Activated T-helper 2 cell treated with anti-CD3 and anti-CD28 coated beads, Interferon-gamma antibody, Interleukin-2, Interleukin-4, amounts not matched to agents 10 μg/mL and 5 μg/mL and 100 μg/mL, durations not matched to agents 14 hours and 24 hours and 36 hours (primary cell): ENCODE measurements at regions of chr10 and their contacts with region 1.

Region 1: DNA sequence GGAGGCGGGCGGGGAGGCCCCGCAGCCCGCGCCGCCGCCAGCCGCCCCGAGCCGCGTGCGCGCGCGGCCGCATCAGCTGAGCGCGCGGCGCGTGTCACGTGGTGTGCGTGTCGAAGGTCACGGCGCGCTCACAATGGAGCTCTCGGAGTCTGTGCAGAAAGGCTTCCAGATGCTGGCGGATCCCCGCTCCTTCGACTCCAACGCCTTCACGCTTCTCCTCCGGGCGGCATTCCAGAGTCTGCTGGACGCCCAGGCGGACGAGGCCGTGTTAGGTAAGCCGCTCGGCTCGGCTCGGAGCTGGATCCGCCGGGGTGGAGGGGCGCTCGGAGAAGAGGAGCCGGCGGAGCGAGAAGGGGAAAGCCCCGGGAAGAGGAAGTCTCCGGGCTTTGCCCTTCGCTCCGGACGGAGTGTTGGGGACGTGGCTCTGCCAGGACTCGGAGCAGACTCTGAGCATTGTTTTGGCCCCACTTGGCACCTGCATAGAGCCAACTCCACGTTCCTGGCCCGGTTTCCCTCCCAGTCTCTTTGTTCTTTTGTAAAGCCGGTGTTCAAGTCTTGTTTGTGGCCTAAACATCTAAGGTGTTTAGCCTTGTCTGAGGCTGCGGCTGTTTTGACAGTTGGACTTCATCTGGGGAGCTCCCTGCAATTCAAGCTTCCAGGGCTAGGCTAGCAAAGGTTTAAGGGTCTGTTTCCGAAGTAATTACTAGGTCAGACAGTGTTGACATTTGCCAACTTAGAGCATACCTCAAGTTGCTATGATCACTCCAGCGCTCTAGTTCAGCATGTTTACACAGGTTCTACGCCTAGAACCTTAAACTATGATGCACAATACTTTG is at the start of gene COMMD3:
- DNase-seq: peak; percentile 79
- H3K4me3 Mint-ChIP-seq: peak within 1 kb of the TSS; percentile 88
- H3K27ac Mint-ChIP-seq: peak within 1 kb of the TSS; percentile 88
- H3K4me1 Mint-ChIP-seq: peaks cover 40% of the 10 kb centered on the region
- H3K27me3 Mint-ChIP-seq: peaks cover 1% of the 10 kb centered on the region
- total RNA-seq, gene COMMD3: 92.1 and 105 TPM in 2 replicates

Region 2: GRCh38 chr10:21517134-21518031 is 799.1 kb before region 1 on chr10:
- intact Hi-C with region 1: loop called (anchors 5 kb)
- DNase-seq: no peak
- H3K4me3 Mint-ChIP-seq: peak overlapping the region; percentile 65
- H3K27ac Mint-ChIP-seq: no peak overlapping the region
- H3K4me1 Mint-ChIP-seq: peaks cover 39% of the 10 kb centered on the region
- H3K27me3 Mint-ChIP-seq: peaks cover 64% of the 10 kb centered on the region

Region 3: DNA sequence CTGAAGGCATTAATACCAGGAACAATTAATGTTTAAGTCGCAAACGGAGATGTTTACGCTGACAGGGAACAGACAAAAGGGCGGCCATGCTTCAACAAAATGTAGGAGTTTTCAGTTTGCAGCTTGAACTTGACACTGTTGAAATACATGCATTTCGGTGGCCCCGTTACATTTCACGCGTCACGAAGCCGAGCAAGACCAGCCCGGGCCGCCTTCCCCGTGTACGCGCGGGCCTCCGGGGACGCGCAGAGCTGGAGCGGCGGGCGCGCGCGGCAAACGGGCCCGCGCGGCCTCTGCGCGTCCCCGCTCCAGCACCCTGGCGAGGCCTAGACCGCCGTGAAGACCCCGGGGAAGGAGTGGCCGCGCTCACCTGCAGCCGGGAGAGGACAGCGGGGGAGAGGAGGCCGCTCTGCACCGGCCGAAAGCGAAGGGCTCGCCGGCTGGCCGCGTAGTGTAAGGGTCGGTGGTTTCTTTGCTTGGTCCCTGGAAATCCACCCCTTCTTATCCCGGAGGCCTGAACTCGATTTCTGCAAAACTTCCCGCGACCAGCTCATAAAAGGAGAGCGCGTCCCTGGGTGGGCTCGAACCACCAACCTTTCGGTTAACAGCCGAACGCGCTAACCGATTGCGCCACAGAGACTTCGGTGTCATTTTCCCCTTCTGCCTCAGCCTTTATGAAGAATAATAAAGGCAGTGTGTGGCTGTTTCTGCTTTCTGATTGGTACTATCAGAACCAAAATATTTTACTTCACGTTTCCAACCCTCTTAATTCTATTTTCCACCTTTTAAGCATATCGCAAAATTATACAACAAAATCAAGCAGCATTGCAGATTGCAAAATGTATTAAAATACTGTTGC is 87.3 kb before region 1 on chr10:
- intact Hi-C with region 1: loop called (anchors 1 kb)
- DNase-seq: peak; percentile 82
- H3K4me3 Mint-ChIP-seq: peak overlapping the region; percentile 88
- H3K27ac Mint-ChIP-seq: peak overlapping the region; percentile 82
- H3K4me1 Mint-ChIP-seq: peaks cover 18% of the 10 kb centered on the region
- H3K27me3 Mint-ChIP-seq: peaks cover 8% of the 10 kb centered on the region

Region 4: GRCh38 chr10:22301193-22301592 is 15.3 kb before region 1 on chr10:
- intact Hi-C with region 1: no loop called
- DNase-seq: no peak
- H3K4me3 Mint-ChIP-seq: no peak overlapping the region
- H3K27ac Mint-ChIP-seq: no peak overlapping the region
- H3K4me1 Mint-ChIP-seq: no peaks in the 10 kb centered on the region
- H3K27me3 Mint-ChIP-seq: no peaks in the 10 kb centered on the region

Region 5: DNA sequence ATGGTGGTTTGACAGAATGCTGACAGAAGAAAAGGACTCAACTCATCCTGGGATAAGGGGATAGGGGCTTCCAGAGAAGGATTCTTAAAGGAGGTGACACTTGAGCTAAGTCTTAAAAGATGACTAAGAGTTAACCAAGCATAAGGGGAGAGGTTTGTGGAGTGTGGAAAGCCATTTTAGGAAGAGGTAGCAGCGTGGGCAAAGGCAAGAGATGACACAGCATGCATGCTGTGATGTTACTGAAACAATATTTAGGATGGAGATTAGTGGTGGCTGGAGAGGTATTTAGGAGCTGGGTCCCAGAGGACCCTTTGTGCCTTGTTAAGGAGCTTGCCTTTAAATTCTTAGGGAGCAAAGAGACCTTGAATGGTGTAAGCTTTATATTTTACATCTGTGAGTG is 93.9 kb after region 1 on chr10:
- intact Hi-C with region 1: no loop called
- DNase-seq: no peak
- H3K4me3 Mint-ChIP-seq: no peak overlapping the region
- H3K27ac Mint-ChIP-seq: no peak overlapping the region
- H3K4me1 Mint-ChIP-seq: peaks cover 3% of the 10 kb centered on the region
- H3K27me3 Mint-ChIP-seq: peaks cover 11% of the 10 kb centered on the region